ENCODE measurements at regions of chr6 and their contacts with region 1.

Region 1: GRCh38 chr6:108052706-108053105 is 21.8 kb downstream of the OSTM1 start:
- DNase-seq: no peak

Region 2: GRCh38 chr6:107870381-107870780 is 182.3 kb before region 1 on chr6:
- intact Hi-C with region 1: loop called (anchors 10 kb)
- DNase-seq: no peak

Measured in posterior cingulate gyrus (tissue), 11 donors.